ENCODE measurements at regions of chr16 and their contacts with region 1.

Region 1: GRCh38 chr16:67660564-67661028 is at the start of gene PARD6A:
- DNase-seq: peak; percentile 53
- H3K4me3 ChIP-seq: peak within 1 kb of the TSS; percentile 94
- CTCF ChIP-seq: no peak

Region 2: DNA sequence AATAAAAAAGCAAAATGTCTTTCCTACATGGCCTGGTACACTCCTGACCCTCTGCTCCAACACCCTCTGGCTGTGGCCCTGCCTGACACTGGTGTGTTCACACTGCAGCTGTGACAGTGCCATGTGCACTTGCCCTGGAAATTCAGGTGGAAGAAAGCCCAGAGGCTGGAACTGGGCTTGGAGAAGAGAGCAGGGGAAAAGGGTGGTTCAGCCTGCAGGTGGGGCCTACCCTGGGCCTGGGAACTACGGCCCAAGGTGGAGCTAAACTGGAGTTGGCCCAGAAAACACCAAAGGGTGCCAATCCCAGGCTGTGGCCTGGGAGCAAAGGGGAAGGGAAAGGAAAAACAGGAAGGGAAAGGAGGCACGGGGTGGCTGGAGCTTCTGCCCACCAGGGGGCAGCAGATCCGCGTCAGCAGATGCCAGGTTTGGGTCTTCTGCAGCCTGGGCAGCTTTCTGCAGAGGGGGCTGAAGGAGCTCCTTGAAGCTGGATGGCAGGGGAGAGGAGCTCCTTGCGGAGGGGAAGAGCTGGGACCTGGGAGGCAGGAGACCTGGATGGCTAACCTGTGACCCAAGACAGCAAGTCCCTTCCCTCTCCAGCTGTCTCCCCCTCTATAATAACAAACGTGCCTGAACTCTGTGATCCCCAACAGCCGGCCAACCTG is 113.7 kb before region 1 on chr16:
- CTCF ChIA-PET with region 1: interaction called, 106 read pairs
- POLR2A ChIA-PET with region 1: no interaction called
- DNase-seq: no peak
- H3K4me3 ChIP-seq: no peak overlapping the region
- CTCF ChIP-seq: peak; percentile 93

Measured in AG04449 (cell line).